Ascending aorta (tissue), 2 donors: ENCODE measurements at regions of chr14 and their contacts with region 1.

Region 1: DNA sequence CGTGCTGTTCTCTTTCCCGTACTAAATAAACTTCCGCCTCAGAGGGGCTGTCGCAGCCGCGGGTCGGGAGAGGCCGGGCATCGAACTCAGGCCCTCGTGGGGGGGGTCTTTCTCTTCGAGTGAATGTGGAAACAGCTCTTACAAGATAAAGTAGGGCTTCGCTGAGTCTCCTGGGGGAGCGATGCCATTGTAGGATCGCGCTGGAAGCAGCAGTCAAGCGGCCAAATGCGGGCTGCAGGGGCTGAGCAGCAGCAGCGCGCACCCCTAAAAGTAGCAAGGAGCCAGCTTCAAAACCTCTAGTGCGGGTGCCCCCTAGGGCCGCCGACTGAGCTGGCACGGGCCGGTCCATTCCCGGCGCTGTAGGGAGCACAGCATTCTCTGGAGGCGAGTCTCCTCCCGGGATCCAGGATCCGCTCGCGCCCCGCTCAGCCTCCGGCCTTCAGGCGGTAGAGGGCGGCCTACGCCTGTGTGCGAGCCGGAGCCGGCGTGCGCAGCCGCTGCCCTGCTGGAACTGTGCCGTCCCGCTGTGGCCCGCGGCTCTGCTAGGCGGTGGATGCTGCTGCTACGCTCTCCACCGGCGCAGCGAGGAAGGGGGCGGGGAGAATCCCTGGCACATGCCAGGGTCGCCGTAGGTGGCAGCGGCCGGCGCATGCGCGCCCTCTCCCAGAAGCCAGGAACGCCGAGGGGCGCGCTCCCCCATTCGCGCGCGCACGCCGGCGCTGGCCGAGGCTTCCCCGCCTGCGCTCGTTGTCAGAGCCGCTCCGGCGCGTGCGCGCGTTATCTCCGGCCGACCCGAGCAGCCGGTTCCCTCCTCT is at the start of gene FUT8:
- DNase-seq: peak; percentile 81 to 97
- H3K4me3 ChIP-seq: peak within 1 kb of the TSS; percentile 87 to 95
- H3K27ac ChIP-seq: peak within 1 kb of the TSS; percentile 92 to 95
- H3K4me1 ChIP-seq: peaks cover 0 to 11% of the 10 kb centered on the region in 2 donors
- H3K27me3 ChIP-seq: no peaks in the 10 kb centered on the region
- CTCF ChIP-seq: peak; percentile 32 to 61 (median 60)
- total RNA-seq, gene FUT8: 12.9 TPM

Region 2: GRCh38 chr14:65035049-65035448 is 377.2 kb before region 1 on chr14:
- intact Hi-C with region 1: no loop called
- DNase-seq: no peak
- H3K4me3 ChIP-seq: no peak overlapping the region
- H3K27ac ChIP-seq: peak overlapping the region; percentile 39 to 57
- H3K4me1 ChIP-seq: peaks cover 0 to 2% of the 10 kb centered on the region in 2 donors
- H3K27me3 ChIP-seq: no peaks in the 10 kb centered on the region
- CTCF ChIP-seq: no peak

Region 3: DNA sequence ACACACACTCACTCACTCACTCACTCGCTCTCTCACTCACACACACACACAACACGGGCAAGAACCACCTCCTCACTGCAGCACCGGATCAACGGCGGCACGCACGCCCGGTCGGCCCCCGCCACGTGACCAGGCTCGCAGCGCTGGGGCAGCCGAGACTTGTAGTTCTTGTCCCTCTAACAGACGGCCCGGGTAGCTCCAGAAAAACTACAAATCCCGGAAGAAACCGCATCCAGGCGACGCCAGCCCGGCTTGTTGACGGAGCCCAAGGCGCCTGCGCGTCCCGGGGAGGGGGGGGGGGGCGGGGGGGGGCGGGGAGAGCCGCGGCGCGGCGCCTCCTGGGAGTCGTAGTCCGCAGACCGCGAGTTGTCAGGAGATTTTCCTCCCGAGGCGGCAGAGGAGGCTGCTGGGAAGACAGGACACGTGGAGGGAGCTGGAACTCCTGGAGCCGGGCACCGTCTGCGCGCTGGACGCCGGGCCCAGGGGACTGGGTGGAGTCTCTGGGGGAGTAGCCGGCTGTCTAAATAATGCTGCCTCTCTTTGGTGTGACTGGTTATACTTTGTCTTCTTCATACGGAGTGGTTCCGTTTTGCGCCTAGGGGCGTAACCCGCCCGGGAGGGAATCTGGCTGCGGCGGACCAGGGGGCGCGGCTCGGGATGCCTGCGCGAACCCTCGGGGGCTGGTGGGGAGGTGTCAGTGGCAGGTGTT is 309.6 kb before region 1 on chr14 and contains the start of gene MAX:
- intact Hi-C with region 1: loop called (anchors 2 kb)
- DNase-seq: peak; percentile 97 to 99
- H3K4me3 ChIP-seq: peak within 1 kb of the TSS; percentile 89 to 93
- H3K27ac ChIP-seq: peak within 1 kb of the TSS; percentile 81 to 88
- H3K4me1 ChIP-seq: peaks cover 6 to 32% of the 10 kb centered on the region in 2 donors
- H3K27me3 ChIP-seq: no peaks in the 10 kb centered on the region
- CTCF ChIP-seq: no peak
- total RNA-seq, gene MAX: 26.8 TPM

Region 4: DNA sequence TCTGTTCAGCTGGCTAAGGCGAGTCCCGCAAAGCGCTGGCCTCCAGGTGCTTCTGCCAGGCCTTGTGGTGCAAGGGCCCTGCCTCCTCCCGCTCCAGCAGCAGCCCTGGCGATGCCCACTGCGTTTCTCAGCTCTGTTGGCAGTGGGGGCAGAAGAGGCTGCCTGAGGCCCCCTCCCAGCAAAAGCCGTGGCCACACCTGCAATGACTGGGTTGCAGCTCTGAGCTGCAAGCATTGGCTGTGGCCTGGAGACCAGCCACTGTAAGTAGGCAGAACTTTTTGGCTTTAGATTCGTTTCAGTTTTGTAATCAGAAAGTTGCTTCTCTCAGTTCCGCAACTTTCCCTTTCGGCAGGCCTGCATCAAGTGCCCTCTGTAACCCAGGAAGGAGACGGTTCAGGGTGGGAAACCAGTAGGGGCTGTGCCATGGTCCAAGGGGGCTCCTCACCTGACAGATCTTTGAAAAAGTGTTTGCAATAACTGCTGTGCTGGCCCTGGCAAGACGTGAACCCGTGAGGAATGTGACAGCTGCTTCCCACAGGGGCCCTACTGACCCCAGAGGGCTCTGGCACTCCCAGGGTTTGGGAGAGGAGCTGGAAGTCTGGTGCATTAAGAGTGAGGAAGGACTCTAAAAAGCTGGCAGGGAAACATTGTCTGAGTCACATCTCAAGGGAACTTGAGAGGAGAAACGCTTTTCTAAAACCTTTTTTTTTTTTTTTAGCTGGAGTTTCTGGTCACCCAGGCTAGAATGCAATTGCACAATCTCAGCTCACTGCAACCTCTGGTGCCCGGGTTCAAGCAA is 255.5 kb before region 1 on chr14:
- intact Hi-C with region 1: loop called (anchors 5 kb)
- DNase-seq: peak in 1 of 2 donors; percentile 75
- H3K4me3 ChIP-seq: peak overlapping the region; percentile 47 to 50
- H3K27ac ChIP-seq: peak overlapping the region; percentile 83 to 88
- H3K4me1 ChIP-seq: peaks cover 0 to 11% of the 10 kb centered on the region in 2 donors
- H3K27me3 ChIP-seq: no peaks in the 10 kb centered on the region
- CTCF ChIP-seq: no peak

Region 5: GRCh38 chr14:65170768-65171507 is 241.3 kb before region 1 on chr14:
- intact Hi-C with region 1: loop called (anchors 5 kb)
- DNase-seq: no peak
- H3K4me3 ChIP-seq: peak overlapping the region; percentile 34 to 47
- H3K27ac ChIP-seq: no peak overlapping the region
- H3K4me1 ChIP-seq: peaks cover 0 to 7% of the 10 kb centered on the region in 2 donors
- H3K27me3 ChIP-seq: no peaks in the 10 kb centered on the region
- CTCF ChIP-seq: no peak

Region 6: DNA sequence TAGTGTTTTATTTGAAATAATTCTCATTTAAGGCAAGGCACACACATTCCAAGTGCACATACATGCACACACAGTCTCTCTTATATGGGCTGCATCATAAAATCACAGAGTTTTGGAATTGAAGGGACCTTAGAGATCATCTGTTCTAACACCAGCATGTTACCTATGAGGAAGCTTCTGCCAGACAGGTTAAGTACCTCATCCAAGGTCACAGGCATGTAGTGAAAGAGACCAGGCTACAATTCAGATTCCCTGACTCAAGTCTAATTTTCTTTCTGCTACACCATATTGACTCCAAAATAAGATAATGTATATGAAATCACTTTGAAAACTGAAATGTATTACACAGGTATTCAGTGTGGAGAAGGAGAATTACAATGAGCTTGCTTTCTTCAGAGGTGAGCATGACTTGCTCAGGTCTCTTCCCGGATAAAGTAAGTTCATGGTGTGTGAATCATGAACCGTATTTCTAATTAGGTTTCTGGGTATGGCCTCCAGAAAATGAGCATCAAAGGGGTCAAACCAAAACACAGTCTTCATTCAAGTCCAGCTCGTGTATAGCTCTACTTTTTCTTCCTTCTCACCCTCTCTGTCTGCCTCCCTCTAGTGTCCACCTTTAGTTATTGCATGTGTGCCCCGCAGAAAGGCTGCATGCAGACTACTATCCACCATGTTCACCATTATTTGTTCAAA is 412.2 kb after region 1 on chr14:
- intact Hi-C with region 1: loop called (anchors 1 kb)
- DNase-seq: no peak
- H3K4me3 ChIP-seq: no peak overlapping the region
- H3K27ac ChIP-seq: no peak overlapping the region
- H3K4me1 ChIP-seq: no peaks in the 10 kb centered on the region
- H3K27me3 ChIP-seq: no peaks in the 10 kb centered on the region
- CTCF ChIP-seq: peak; percentile 66 to 89 (median 77)

Region 7: GRCh38 chr14:66507722-66508546 is 1095.7 kb after region 1 on chr14 and contains the start of gene GPHN:
- intact Hi-C with region 1: loop called (anchors 5 kb)
- DNase-seq: peak; percentile 88 to 98
- H3K4me3 ChIP-seq: peak within 1 kb of the TSS; percentile 82 to 84
- H3K27ac ChIP-seq: peak within 1 kb of the TSS; percentile 85 to 92
- H3K4me1 ChIP-seq: peaks cover 0 to 2% of the 10 kb centered on the region in 2 donors
- H3K27me3 ChIP-seq: no peaks in the 10 kb centered on the region
- CTCF ChIP-seq: peak in 2 of 3 experiments; percentile 19 to 43
- total RNA-seq, gene GPHN: 3.3 TPM